ENCODE measurements at regions of chr16 and their contacts with region 1.

Region 1: DNA sequence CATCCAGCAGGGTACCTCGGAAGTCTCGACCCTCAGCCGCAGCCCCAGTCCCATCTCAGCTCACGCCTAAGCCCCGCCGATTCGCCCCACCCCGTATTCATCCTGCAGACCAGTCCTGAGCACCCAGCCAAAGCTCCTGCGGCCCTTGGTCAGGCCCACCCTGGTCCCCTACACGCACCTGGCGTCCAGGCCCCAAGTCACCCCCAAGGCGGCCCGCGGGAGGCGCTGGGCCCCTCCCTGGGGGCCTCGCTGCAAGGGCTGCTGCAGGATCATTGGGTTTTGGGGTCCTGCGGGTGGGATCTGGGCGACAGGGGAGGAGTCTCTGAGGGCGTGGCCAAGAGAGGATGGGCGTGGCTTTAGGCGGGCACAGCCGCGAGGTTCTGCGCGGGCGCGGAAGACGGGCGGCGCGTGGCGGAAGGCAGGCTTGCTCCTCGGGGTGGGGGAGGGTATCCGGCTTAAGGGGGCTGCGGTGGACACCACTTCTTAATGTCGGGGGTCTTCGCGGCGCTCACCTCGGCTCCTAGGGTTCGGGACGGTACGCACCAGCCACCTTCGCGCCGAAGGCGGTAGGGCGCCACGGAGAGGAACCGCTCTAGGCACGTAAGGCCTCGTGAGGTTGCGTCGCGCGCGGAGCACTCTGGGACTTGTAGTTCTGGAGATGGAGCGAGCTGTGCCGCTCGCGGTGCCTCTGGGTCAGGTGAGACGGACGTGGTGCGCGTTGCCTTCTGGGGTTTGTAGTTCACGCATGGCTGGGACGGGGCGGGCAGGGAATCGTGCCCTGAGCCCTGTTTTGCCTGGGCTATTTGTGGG is at the starts of genes HCFC1R1 and THOC6:
- DNase-seq: peak; percentile 99
- ATAC-seq: peak; percentile 70
- H3K4me3 Mint-ChIP-seq: peak within 1 kb of the TSS; percentile 77
- H3K27ac Mint-ChIP-seq: peak within 1 kb of the TSS; percentile 97
- H3K4me1 Mint-ChIP-seq: peaks cover 50% of the 10 kb centered on the region
- H3K27me3 Mint-ChIP-seq: peaks cover 7% of the 10 kb centered on the region
- CTCF ChIP-seq: no peak
- total RNA-seq, gene HCFC1R1: 24.2 to 24.8 TPM
- total RNA-seq, gene THOC6: 55.4 to 56.6 TPM

Region 2: GRCh38 chr16:2980227-2981086 is 43.4 kb before region 1 on chr16 and contains the start of gene PKMYT1:
- CTCF ChIA-PET with region 1: interaction called, 14 read pairs
- POLR2A ChIA-PET with region 1: interaction called, 4 read pairs
- intact Hi-C with region 1: no loop called
- DNase-seq: peak; percentile 94
- ATAC-seq: peak; percentile 94
- H3K4me3 Mint-ChIP-seq: peak within 1 kb of the TSS; percentile 87
- H3K27ac Mint-ChIP-seq: peak within 1 kb of the TSS; percentile 86
- H3K4me1 Mint-ChIP-seq: peaks cover 13% of the 10 kb centered on the region
- H3K27me3 Mint-ChIP-seq: no peaks in the 10 kb centered on the region
- CTCF ChIP-seq: no peak
- total RNA-seq, gene PKMYT1: 121 to 123 TPM

Region 3: GRCh38 chr16:3003582-3004302 is 20.1 kb before region 1 on chr16:
- CTCF ChIA-PET with region 1: interaction called, 85 read pairs
- POLR2A ChIA-PET with region 1: interaction called, 6 read pairs
- intact Hi-C with region 1: no loop called
- DNase-seq: peak; percentile 98
- ATAC-seq: peak; percentile 99
- H3K4me3 Mint-ChIP-seq: no peak overlapping the region
- H3K27ac Mint-ChIP-seq: no peak overlapping the region
- H3K4me1 Mint-ChIP-seq: peaks cover 19% of the 10 kb centered on the region
- H3K27me3 Mint-ChIP-seq: peaks cover 5% of the 10 kb centered on the region
- CTCF ChIP-seq: peak; percentile 59

Region 4: GRCh38 chr16:3009565-3010390 is 14.1 kb before region 1 on chr16:
- CTCF ChIA-PET with region 1: interaction called, 85 read pairs
- POLR2A ChIA-PET with region 1: interaction called, 6 read pairs
- intact Hi-C with region 1: no loop called
- DNase-seq: no peak
- ATAC-seq: no peak
- H3K4me3 Mint-ChIP-seq: no peak overlapping the region
- H3K27ac Mint-ChIP-seq: no peak overlapping the region
- H3K4me1 Mint-ChIP-seq: peaks cover 21% of the 10 kb centered on the region
- H3K27me3 Mint-ChIP-seq: peaks cover 13% of the 10 kb centered on the region
- CTCF ChIP-seq: no peak

Region 5: GRCh38 chr16:3038256-3038655 is 14.4 kb after region 1 on chr16:
- CTCF ChIA-PET with region 1: interaction called, 135 read pairs
- POLR2A ChIA-PET with region 1: interaction called, 5 read pairs
- intact Hi-C with region 1: no loop called
- DNase-seq: no peak
- ATAC-seq: no peak
- H3K4me3 Mint-ChIP-seq: no peak overlapping the region
- H3K27ac Mint-ChIP-seq: no peak overlapping the region
- H3K4me1 Mint-ChIP-seq: peaks cover 8% of the 10 kb centered on the region
- H3K27me3 Mint-ChIP-seq: peaks cover 65% of the 10 kb centered on the region
- CTCF ChIP-seq: no peak

Region 6: DNA sequence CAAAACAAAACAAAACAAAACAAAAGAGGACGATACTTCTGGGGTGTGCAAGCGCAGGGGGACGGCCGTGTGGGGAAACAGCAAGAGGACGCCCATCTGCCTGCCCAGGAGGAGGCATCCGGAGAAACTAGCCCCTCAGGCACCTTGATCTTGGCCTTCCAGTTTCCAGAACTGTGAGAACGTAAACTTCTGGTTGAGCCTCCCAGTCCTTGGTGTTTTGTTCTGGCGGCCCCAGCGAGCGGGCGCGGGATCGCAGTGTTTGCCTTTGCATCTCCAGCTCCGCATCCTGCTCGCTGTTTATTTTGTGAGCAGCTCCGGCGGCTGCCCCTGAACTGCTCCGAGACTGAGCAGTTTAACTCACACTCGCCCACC is 21.5 kb after region 1 on chr16:
- CTCF ChIA-PET with region 1: interaction called, 99 read pairs
- POLR2A ChIA-PET with region 1: interaction called, 6 read pairs
- intact Hi-C with region 1: no loop called
- DNase-seq: peak; percentile 60
- ATAC-seq: peak; percentile 60
- H3K4me3 Mint-ChIP-seq: peak overlapping the region; percentile 69
- H3K27ac Mint-ChIP-seq: peak overlapping the region; percentile 15
- H3K4me1 Mint-ChIP-seq: peaks cover 15% of the 10 kb centered on the region
- H3K27me3 Mint-ChIP-seq: peaks cover 38% of the 10 kb centered on the region
- CTCF ChIP-seq: no peak

Region 7: DNA sequence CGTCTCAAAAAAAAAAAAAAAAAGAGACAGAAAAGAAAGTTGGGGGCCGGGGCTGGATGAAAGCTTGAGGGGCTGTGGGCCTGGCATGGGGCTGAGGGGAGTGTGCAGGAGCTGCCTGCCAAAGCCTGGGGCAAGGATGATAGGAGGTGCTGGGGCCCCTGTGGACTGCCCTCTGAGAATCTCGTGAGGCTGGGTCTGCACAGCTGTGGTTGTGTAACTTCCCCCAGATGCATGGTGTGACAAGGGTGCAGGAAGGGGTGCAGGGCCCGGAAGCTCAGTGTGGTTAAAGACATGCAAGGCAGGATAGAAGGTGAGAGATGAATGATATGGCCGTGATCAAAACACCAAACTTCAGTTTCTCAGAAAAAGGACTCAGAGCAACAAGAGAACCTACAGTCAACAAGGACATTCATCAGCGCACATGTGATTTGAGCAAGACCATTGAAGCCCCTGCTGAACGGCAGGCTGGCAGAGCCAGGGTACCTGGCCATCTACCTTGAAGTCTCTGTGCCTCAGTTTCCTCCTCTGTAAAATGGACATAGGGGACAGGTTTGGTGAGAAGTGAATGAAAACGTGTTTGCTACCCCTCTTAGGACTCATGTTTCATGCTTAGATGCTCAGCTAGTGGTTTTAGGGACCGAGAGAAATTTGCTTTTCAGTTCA is 51.1 kb after region 1 on chr16:
- CTCF ChIA-PET with region 1: interaction called, 10 read pairs
- POLR2A ChIA-PET with region 1: no interaction called
- intact Hi-C with region 1: no loop called
- DNase-seq: peak; percentile 93
- ATAC-seq: peak; percentile 75
- H3K4me3 Mint-ChIP-seq: peak overlapping the region; percentile 60
- H3K27ac Mint-ChIP-seq: peak overlapping the region; percentile 97
- H3K4me1 Mint-ChIP-seq: peaks cover 75% of the 10 kb centered on the region
- H3K27me3 Mint-ChIP-seq: no peaks in the 10 kb centered on the region
- CTCF ChIP-seq: no peak